ENCODE measurements at regions of chr4 and their contacts with region 1.

Region 1: GRCh38 chr4:77358315-77358928 is 201.4 kb downstream of the CCNG2 start:
- DNase-seq: peak in 1 of 2 experiments; percentile 47
- H3K4me3 ChIP-seq: no peak overlapping the region
- H3K4me3 Mint-ChIP-seq: no peak overlapping the region
- H3K27ac Mint-ChIP-seq: no peak overlapping the region
- H3K4me1 ChIP-seq: no peaks in the 10 kb centered on the region
- H3K4me1 Mint-ChIP-seq: no peaks in the 10 kb centered on the region
- H3K27me3 ChIP-seq: no peaks in the 10 kb centered on the region
- H3K27me3 Mint-ChIP-seq: no peaks in the 10 kb centered on the region
- CTCF ChIP-seq: peak; percentile 51 to 55

Region 2: DNA sequence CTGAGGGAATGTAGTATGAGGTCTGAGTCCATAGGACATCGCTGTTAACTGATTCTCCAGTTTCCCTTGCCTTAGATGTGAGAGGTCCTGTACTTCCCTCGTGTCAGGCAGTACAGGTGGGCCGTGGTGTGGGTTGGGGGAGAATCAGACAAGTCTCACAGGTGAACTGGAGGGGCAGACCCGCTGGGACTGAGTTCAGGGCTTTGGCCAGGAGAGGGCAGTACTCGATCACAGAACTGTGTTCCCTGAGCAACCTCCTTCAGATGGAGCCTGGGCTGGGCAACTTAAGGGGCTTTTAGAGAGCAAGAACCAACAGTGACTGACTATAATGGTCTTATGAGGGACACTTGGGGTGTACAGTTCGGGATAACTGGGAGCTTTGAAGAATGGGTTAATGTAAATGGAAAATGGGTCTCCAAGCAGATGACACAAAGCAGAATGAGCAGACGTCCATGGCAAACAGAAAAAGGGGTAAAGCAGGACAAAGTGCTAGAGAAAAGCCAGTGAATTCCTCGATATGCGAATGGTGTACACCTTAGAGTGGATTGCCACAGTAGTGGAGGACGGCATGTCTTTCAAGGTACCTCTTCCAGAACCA is 117.9 kb before region 1 on chr4:
- CTCF ChIA-PET with region 1: interaction called, 14 read pairs
- POLR2A ChIA-PET with region 1: no interaction called
- intact Hi-C with region 1: loop called (anchors 1 kb)
- DNase-seq: peak; percentile 74 to 78
- H3K4me3 ChIP-seq: no peak overlapping the region
- H3K4me3 Mint-ChIP-seq: no peak overlapping the region
- H3K27ac Mint-ChIP-seq: no peak overlapping the region
- H3K4me1 ChIP-seq: no peaks in the 10 kb centered on the region
- H3K4me1 Mint-ChIP-seq: no peaks in the 10 kb centered on the region
- H3K27me3 ChIP-seq: no peaks in the 10 kb centered on the region; the same call in 1 of the 2 replicates
- H3K27me3 Mint-ChIP-seq: peaks cover 6% of the 10 kb centered on the region
- CTCF ChIP-seq: peak; percentile 73 to 79

Measured in Caco-2 (cell line).